ENCODE measurements at regions of chr19 and their contacts with region 1.

Region 1: DNA sequence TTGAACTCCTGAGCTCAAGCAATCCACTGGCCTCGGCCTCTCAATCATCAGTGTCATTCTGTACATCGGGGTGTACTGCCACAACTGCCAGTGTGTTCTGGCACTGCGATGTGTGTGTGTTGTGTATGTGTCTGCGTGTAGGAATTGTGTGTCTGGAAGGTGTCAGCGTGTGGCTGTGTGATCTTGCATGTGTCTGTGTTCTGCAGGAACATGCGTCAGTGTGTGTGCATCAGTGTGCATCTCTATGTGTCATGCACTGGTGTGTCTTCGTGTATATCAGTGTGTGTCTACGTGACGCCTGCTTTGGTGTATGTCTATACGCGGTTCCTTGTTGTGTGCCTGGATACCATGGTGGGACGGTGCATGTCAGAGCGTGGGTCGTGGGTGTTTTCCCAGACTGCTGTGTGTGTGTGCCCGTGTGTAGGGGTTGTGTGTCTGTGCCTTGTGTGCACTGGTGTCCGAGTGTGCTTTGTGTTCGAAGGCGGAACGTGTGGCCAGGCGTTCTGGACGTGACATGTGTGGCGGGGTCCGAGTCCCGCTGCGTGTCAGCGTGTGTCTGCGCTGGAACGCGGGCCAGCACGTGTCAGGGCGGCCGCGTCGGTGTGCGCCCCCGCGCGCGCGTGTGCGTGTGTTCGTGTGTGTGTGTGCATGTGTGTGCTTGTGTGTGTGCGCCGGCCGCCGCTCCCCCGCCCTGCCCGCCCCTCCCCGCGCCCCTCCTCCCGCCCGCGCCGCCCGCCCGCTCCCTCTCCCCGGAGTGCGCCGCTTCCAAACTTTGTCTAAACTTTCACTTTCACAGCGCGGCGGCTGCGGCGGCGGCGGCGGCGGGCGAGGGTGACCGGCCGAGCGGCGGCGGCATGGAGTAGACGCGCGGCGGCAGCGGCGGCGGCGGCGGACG is at the start of gene NFIX:
- DNase-seq: no peak
- H3K4me3 ChIP-seq: peak within 1 kb of the TSS; percentile 78 to 87
- H3K27ac ChIP-seq: peak within 1 kb of the TSS; percentile 96 to 97
- H3K4me1 ChIP-seq: peaks cover 16% of the 10 kb centered on the region
- H3K27me3 ChIP-seq: no peaks in the 10 kb centered on the region
- CTCF ChIP-seq: no peak
- POLR2A ChIP-seq: no peak
- total RNA-seq, gene NFIX: 185 to 286 TPM

Region 2: DNA sequence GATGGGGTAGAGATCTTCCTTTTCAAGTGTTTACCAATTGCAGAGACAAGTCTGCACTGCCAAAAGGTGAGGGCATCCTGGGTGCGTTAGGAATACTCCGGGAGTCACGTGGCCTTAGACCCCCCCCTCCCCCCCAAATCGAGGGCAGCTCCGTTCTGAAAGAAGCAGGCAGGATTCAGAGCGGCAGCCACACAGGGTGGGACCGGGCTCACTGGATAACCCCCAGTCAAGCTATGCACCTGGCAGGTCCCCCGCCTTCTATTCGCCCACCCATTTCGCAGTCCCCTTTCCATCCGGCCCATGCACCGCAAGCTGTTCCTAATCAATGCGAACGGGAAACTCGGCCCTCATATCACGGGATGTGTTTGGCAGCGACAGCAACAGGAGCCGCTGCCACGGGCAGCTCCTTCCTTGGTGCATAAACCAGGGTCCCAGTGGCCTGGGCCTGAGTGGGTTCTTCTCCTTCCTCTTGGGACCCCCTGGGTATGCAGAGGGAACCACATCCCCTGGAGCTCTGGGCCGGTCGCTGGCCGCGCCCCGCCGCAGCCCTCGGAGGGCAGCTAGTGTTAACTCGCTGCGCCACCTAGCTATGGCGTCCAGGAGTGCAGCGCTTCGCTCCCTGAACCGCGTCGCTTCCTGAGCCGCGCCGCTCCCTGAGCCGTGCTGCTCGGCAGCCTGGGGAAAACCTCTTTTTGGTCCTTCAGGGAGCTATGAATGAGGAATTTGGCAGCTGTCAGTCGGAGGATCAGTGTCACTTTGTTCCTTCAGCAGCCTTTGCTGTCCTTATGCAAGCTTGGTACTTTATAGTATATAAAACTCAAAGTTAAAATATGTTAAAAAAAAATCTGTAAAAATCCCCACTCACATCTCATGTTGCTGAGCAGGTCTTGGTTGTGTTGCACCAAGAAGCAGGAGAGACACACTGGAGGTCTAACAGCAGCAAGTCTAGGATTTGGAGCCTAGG is 66.3 kb after region 1 on chr19:
- intact Hi-C with region 1: loop called (anchors 2 kb)
- DNase-seq: peak; percentile 81
- H3K4me3 ChIP-seq: peak overlapping the region; percentile 14 to 22
- H3K27ac ChIP-seq: peak overlapping the region; percentile 95 to 96
- H3K4me1 ChIP-seq: peaks cover 66% of the 10 kb centered on the region
- H3K27me3 ChIP-seq: no peaks in the 10 kb centered on the region
- CTCF ChIP-seq: peak; percentile 85 to 98 (median 94)
- POLR2A ChIP-seq: no peak

Measured in prostate gland (tissue), 2 donors.